IMR-90 (cell line): ENCODE measurements at regions of chr10 and their contacts with region 1.

Region 1: DNA sequence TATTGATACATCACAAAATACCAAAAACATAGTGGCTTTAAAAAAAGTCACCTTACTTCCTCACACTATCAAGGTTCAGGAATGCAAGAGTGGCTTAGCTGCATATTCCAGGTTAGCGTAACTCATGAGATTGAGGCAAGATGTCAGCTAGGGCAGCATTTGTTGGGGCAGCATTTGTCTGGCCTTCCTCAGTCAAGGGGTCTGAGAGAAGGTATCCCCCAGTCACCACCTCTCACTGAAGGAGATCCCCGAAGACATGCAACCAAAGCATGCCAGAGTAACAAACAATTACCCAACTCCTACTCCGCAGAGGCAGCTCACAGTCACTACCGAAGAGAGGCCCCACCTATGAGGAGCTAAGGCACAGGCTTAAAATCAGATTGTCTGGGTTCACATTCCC is 48.4 kb downstream of the C10orf71 start:
- DNase-seq: no peak
- ATAC-seq: no peak
- H3K4me3 ChIP-seq: no peak overlapping the region
- H3K27ac ChIP-seq: no peak overlapping the region
- H3K4me1 ChIP-seq: no peaks in the 10 kb centered on the region
- H3K27me3 ChIP-seq: peaks cover 2% of the 10 kb centered on the region; the same call in 1 of the 2 replicates
- CTCF ChIP-seq: no peak
- POLR2A ChIP-seq: no peak
- RAD21 ChIP-seq: no peak

Region 2: DNA sequence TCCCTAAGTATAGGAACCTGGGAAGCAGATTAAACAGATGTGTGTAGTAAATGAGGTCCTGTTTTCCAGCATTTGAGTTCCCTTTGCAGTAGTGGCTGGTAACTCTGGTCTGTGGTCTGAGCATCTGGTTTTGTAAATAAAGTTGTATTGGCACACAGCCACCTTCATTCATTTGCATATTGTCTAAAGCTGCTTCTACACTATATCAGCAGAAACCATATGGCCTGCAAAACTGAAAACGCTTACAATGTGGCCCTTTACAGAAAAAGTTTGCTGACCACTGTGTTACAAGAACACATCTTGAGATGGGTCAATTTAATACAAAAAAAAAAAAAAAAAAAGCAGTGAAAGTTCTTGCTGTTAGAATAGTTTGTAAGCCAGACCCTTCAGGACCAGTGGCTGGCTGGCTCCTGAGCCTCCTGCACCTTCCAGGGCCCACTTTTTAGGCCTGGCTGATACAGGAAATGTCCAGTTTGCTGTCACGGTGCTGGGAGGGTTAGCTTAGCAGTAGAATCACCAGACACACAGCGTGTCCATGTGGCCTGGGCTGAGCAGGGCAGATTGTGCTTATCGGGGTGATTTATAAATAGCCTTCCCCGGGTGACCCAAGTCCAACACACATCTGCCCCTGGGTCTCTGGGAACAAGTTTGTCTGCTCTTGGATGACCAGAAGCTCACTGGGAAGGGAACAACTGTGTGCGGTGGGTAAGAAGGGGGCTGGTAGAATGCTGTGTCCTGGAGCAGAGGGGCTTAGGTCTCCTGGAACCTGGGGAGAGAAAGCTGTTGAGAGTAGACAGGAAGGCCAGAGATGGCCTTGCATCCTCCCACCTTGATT is 47.0 kb before region 1 on chr10:
- CTCF ChIA-PET with region 1: no interaction called
- POLR2A ChIA-PET with region 1: no interaction called
- dilution Hi-C with region 1: no loop called
- in situ Hi-C with region 1: no loop called
- intact Hi-C with region 1: no loop called
- DNase-seq: peak; percentile 17
- ATAC-seq: no peak
- H3K4me3 ChIP-seq: no peak overlapping the region
- H3K27ac ChIP-seq: no peak overlapping the region
- H3K4me1 ChIP-seq: peaks cover 2% of the 10 kb centered on the region; the same call in 1 of the 2 replicates
- H3K27me3 ChIP-seq: peaks cover 43% of the 10 kb centered on the region
- CTCF ChIP-seq: no peak
- POLR2A ChIP-seq: no peak
- RAD21 ChIP-seq: no peak

Region 3: DNA sequence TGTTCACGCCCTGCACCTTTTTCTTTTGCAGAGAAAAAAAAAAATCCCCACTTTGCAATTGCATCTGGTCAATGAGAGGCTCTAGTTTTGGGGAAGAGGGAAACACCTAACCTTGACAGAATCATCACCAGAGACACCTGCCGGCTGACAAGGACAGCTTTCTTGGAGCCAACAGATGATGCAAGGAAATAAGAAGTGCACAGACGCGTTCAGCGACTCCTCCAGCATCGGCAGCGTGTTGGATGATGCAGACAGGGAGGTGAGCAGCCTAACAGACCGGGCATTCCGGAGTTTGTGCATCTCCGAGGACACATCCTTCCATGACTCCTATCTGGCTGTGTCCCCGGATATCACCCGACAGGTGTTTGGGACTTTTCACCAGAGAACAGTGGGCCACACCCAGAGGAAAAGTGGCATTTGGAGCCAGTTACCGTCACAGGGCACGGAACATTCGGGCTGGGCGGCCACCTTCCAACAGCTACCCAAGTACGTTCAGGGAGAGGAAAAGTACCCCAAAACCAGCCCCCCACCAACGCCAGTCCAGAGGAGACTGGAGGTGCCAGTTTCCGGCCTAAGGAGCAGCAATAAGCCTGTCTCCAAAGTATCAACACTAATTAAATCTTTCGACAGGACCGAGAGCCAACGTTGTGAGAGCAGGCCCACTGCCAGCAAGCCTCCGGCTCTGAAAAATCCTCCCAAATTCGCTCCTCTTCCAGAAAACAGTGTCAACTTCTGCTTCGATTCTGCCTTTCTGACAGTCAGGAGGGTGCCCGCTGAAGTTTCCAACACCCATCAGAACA is 24.8 kb before region 1 on chr10:
- CTCF ChIA-PET with region 1: no interaction called
- POLR2A ChIA-PET with region 1: no interaction called
- dilution Hi-C with region 1: no loop called
- in situ Hi-C with region 1: no loop called
- intact Hi-C with region 1: loop called (anchors 1 kb)
- DNase-seq: no peak
- ATAC-seq: no peak
- H3K4me3 ChIP-seq: no peak overlapping the region
- H3K27ac ChIP-seq: no peak overlapping the region
- H3K4me1 ChIP-seq: no peaks in the 10 kb centered on the region
- H3K27me3 ChIP-seq: peaks cover 15% of the 10 kb centered on the region; the same call in 1 of the 2 replicates
- CTCF ChIP-seq: no peak
- POLR2A ChIP-seq: no peak
- RAD21 ChIP-seq: no peak